ENCODE measurements at regions of chr17 and their contacts with region 1.

Region 1: GRCh38 chr17:68462381-68463210 is 5.3 kb upstream of the WIPI1 start:
- DNase-seq: peak in 2 of 3 donors; percentile 32 to 76
- ATAC-seq: peak; percentile 85 to 90 (median 86)
- H3K4me3 ChIP-seq: no peak overlapping the region
- H3K27ac ChIP-seq: no peak overlapping the region
- H3K4me1 ChIP-seq: peaks cover 0 to 21% (median 2%) of the 10 kb centered on the region in 4 donors
- H3K27me3 ChIP-seq: no peaks in the 10 kb centered on the region
- CTCF ChIP-seq: peak; percentile 72 to 79 (median 74)
- POLR2A ChIP-seq: no peak

Region 2: GRCh38 chr17:68172461-68172954 is 290.1 kb before region 1 on chr17:
- intact Hi-C with region 1: loop called (anchors 10 kb)
- DNase-seq: peak; percentile 57 to 69 (median 69)
- ATAC-seq: peak; percentile 85 to 96 (median 94)
- H3K4me3 ChIP-seq: no peak overlapping the region
- H3K27ac ChIP-seq: no peak overlapping the region
- H3K4me1 ChIP-seq: no peaks in the 10 kb centered on the region
- H3K27me3 ChIP-seq: no peaks in the 10 kb centered on the region
- CTCF ChIP-seq: peak; percentile 95 to 98 (median 96)
- POLR2A ChIP-seq: no peak

Region 3: DNA sequence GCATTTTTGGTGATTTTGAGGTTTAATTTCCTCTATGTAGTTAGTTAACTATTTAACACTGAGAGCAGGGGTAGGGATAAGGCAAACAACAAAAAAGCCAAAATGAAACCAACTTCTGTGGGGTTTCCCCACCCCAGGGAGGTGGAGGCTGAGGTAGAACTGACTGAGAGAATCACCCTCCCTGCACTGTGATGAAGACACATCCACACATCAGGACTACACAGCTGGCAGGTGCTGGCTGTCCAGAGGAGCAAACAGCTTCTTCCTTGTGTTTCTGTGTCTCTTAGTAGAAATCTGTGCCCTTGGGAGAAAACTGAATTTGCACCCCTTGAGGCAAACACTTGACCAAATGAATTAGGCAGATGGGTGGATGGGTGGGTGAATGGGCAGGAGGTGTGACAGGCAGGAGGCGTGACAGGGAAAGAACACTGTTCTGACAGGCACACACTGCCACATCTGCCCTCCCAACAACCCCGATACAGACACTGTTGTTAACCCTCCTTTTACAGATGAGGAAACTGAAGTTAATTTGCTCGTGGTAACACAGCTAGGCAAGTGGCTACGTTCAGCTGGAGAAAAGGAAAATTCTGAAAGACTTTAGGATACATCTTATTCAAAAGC is 277.7 kb before region 1 on chr17:
- intact Hi-C with region 1: no loop called
- DNase-seq: no peak
- ATAC-seq: peak in 1 of 4 donors; percentile 30
- H3K4me3 ChIP-seq: no peak overlapping the region
- H3K27ac ChIP-seq: no peak overlapping the region
- H3K4me1 ChIP-seq: no peaks in the 10 kb centered on the region
- H3K27me3 ChIP-seq: no peaks in the 10 kb centered on the region
- CTCF ChIP-seq: no peak
- POLR2A ChIP-seq: no peak

Region 4: DNA sequence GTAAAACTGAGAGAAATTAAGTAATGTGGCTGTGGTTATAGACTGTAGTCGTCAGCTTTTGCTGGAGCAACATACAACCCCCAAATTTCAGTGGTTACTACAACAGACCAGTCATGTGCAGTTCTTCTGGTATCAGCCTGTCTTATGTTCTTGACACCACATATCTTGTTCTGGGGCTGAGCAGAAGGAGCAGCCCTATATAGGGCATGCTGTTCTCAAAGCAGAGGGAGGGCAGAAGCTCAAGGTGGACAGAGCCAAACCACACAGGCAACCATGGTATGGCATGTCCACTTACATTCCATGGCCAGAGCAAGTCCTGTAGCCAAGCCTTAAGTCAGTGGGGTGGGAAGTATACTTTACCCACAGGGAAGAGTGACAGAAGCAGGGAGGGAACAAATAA is 57.3 kb after region 1 on chr17:
- intact Hi-C with region 1: no loop called
- DNase-seq: no peak
- ATAC-seq: peak in 2 of 4 donors; percentile 16 to 28
- H3K4me3 ChIP-seq: no peak overlapping the region
- H3K27ac ChIP-seq: no peak overlapping the region
- H3K4me1 ChIP-seq: peaks cover 0 to 23% (median 0%) of the 10 kb centered on the region in 4 donors
- H3K27me3 ChIP-seq: no peaks in the 10 kb centered on the region
- CTCF ChIP-seq: no peak
- POLR2A ChIP-seq: no peak